HepG2 (cell line): ENCODE measurements at regions of chr5 and their contacts with region 1.

Region 1: GRCh38 chr5:167870055-167870454 is 421.4 kb upstream of the WWC1 start:
- DNase-seq: no peak
- ATAC-seq: no peak
- H3K4me3 ChIP-seq: no peak overlapping the region
- H3K27ac ChIP-seq: no peak overlapping the region
- H3K4me1 ChIP-seq: no peaks in the 10 kb centered on the region
- H3K27me3 ChIP-seq: no peaks in the 10 kb centered on the region
- CTCF ChIP-seq: no peak
- EP300 ChIP-seq: no peak
- POLR2A ChIP-seq: no peak
- RAD21 ChIP-seq: no peak

Region 2: GRCh38 chr5:167709625-167710024 is 160.4 kb before region 1 on chr5:
- CTCF ChIA-PET with region 1: no interaction called
- POLR2A ChIA-PET with region 1: no interaction called
- in situ Hi-C with region 1: no loop called
- intact Hi-C with region 1: no loop called
- DNase-seq: no peak
- ATAC-seq: no peak
- H3K4me3 ChIP-seq: no peak overlapping the region
- H3K27ac ChIP-seq: no peak overlapping the region
- H3K4me1 ChIP-seq: no peaks in the 10 kb centered on the region
- H3K27me3 ChIP-seq: no peaks in the 10 kb centered on the region
- CTCF ChIP-seq: no peak
- EP300 ChIP-seq: no peak
- POLR2A ChIP-seq: no peak
- RAD21 ChIP-seq: no peak

Region 3: DNA sequence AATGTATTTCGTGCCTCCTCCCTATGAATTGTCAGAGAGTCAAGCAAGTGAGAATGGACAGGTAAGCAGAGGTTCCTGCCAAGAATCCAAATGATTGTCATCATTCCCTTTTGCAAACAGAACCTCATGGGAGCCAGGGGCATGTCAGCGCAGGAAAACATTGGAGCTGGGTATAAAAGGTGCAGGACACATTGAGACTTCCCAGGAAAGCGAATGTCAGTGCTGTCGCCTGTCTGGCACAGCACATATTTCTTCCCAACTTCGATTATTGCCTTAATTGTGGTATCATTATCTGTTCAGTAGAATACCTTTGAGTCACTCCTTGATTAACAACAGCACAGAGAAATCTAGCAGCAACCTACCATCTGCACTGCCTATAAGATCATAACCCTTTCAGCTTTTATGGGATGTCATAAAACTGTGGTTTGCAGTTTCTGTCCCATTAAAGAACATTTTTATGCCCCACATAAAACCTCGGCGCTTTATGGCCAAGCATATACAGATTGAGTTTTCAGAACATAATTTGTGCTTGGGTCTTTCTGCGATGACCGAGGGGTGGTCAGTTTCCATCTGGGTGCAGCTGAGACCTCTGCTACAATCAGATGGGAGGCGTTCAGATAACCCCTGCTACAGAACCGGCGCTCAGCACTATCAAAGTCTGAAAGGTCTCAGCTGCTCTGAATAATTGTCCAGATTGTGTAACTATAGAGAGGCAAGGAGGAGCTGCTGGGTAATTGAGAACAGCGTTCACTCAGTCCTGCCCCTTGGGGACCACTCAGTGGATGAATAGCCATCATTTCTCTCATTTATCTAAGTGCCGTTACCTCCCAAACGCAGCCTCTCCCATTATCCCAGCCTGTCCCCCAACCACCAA is 390.5 kb after region 1 on chr5:
- CTCF ChIA-PET with region 1: no interaction called
- POLR2A ChIA-PET with region 1: no interaction called
- in situ Hi-C with region 1: no loop called
- intact Hi-C with region 1: loop called (anchors 5 kb)
- DNase-seq: no peak
- ATAC-seq: no peak
- H3K4me3 ChIP-seq: no peak overlapping the region
- H3K27ac ChIP-seq: no peak overlapping the region
- H3K4me1 ChIP-seq: no peaks in the 10 kb centered on the region
- H3K27me3 ChIP-seq: peaks cover 0 to 2% of the 10 kb centered on the region in 2 experiments; a peak in 3 of 5 replicates
- CTCF ChIP-seq: no peak
- EP300 ChIP-seq: no peak
- POLR2A ChIP-seq: no peak
- RAD21 ChIP-seq: no peak